ENCODE measurements at regions of chr14 and their contacts with region 1.

Region 1: GRCh38 chr14:106044949-106045600 is 518.7 kb downstream of the TMEM121 start:
- DNase-seq: peak; percentile 93
- ATAC-seq: peak; percentile 100
- H3K4me3 Mint-ChIP-seq: no peak overlapping the region
- H3K27ac Mint-ChIP-seq: peak overlapping the region; percentile 34
- H3K4me1 Mint-ChIP-seq: peaks cover 11% of the 10 kb centered on the region
- H3K27me3 Mint-ChIP-seq: no peaks in the 10 kb centered on the region

Region 2: DNA sequence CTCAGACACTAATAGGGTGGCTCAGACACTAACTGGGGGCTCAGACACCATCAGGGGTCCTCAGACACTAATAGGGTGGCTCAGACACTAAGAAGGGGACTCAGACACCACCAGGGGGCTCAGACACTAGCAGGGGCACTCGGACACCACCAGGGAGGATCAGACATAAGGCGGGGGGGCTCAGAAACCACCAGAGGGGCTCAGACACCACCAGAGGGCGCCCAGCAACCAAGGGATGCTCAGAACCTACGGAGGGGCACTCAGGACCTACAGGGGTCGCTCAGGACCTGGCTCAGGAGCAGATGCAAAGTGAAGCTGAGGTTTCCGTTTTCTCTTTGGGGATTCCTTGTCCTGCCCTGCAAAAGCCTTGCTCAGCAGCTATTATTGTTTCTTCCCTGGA is 70.2 kb before region 1 on chr14:
- CTCF ChIA-PET with region 1: interaction called, 16 read pairs
- POLR2A ChIA-PET with region 1: no interaction called
- intact Hi-C with region 1: loop called (anchors 1 to 2 kb)
- DNase-seq: peak; percentile 81
- ATAC-seq: peak; percentile 96
- H3K4me3 Mint-ChIP-seq: no peak overlapping the region
- H3K27ac Mint-ChIP-seq: no peak overlapping the region
- H3K4me1 Mint-ChIP-seq: peaks cover 3% of the 10 kb centered on the region
- H3K27me3 Mint-ChIP-seq: no peaks in the 10 kb centered on the region

Region 3: DNA sequence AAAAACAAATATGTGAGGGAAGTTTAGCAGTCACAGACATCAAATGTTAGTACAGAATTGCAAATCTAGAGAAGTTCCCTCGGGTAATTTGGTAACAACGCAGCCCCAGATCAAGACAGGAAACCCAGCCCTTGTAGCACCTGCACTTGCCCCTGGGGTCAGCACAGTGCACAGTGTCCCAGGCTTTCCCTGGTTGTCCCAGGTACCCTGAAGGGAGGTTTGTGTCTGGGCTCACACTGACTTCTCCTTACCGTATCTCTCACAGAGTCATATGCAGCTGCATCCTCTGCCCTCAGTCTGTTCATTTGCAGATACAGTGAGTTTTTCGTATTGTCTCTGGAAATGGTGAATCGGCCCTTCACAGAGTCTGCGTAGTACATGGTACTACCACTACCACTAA is 10.2 kb after region 1 on chr14:
- CTCF ChIA-PET with region 1: interaction called, 19 read pairs
- POLR2A ChIA-PET with region 1: no interaction called
- intact Hi-C with region 1: no loop called
- DNase-seq: no peak
- ATAC-seq: no peak
- H3K4me3 Mint-ChIP-seq: no peak overlapping the region
- H3K27ac Mint-ChIP-seq: no peak overlapping the region
- H3K4me1 Mint-ChIP-seq: peaks cover 26% of the 10 kb centered on the region
- H3K27me3 Mint-ChIP-seq: peaks cover 4% of the 10 kb centered on the region

Region 4: GRCh38 chr14:106062502-106063272 is 17.6 kb after region 1 on chr14:
- CTCF ChIA-PET with region 1: interaction called, 19 read pairs
- POLR2A ChIA-PET with region 1: no interaction called
- intact Hi-C with region 1: no loop called
- DNase-seq: no peak
- ATAC-seq: no peak
- H3K4me3 Mint-ChIP-seq: no peak overlapping the region
- H3K27ac Mint-ChIP-seq: no peak overlapping the region
- H3K4me1 Mint-ChIP-seq: peaks cover 30% of the 10 kb centered on the region
- H3K27me3 Mint-ChIP-seq: peaks cover 10% of the 10 kb centered on the region

Region 5: GRCh38 chr14:106174206-106174605 is 129.1 kb after region 1 on chr14:
- CTCF ChIA-PET with region 1: no interaction called
- POLR2A ChIA-PET with region 1: no interaction called
- intact Hi-C with region 1: no loop called
- DNase-seq: peak; percentile 71
- ATAC-seq: peak; percentile 68
- H3K4me3 Mint-ChIP-seq: no peak overlapping the region
- H3K27ac Mint-ChIP-seq: peak overlapping the region; percentile 4
- H3K4me1 Mint-ChIP-seq: peaks cover 61% of the 10 kb centered on the region
- H3K27me3 Mint-ChIP-seq: no peaks in the 10 kb centered on the region

Measured in activated CD4-positive, alpha-beta T cell treated with anti-CD3 and anti-CD28 coated beads for 36 hours (primary cell).